HCT116 (cell line): ENCODE measurements at regions of chr2 and their contacts with region 1.

Region 1: DNA sequence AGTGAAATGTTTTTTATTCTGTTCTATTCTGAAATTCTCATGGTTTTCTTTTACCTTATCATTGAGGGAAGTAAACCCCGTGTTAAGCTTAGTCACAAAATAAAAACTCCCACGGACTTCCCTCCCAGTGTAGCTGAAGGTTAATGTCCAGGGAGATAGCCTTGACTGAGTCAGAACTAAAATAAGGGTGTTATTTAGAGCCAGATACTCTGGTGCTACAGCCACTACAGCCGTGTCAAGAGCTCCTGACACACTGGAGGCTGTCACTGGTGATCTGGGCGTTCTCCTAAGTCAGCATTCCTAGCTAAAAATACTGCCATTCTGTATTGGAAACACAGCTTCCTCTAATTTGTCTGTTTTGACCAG is 82.0 kb upstream of the RANBP2 start:
- DNase-seq: no peak
- ATAC-seq: no peak
- H3K4me3 ChIP-seq: no peak overlapping the region
- H3K27ac ChIP-seq: no peak overlapping the region
- H3K4me1 ChIP-seq: peaks cover 0 to 40% of the 10 kb centered on the region in 2 experiments; a peak in 2 of 4 replicates
- H3K27me3 ChIP-seq: no peaks in the 10 kb centered on the region
- CTCF ChIP-seq: no peak
- POLR2A ChIP-seq: no peak
- RAD21 ChIP-seq: no peak

Region 2: GRCh38 chr2:108594132-108594981 is 42.9 kb before region 1 on chr2:
- CTCF ChIA-PET with region 1: interaction called, 11 read pairs
- POLR2A ChIA-PET with region 1: no interaction called
- RAD21 ChIA-PET with region 1: interaction called in 1 of 2 experiments, 6 read pairs
- intact Hi-C with region 1: no loop called
- DNase-seq: peak; percentile 62
- ATAC-seq: peak; percentile 65
- H3K4me3 ChIP-seq: peak overlapping the region in 1 of 2 experiments; percentile 42; a peak in 2 of 4 replicates
- H3K27ac ChIP-seq: peak overlapping the region; percentile 24; the same call in 1 of the 2 replicates
- H3K4me1 ChIP-seq: peaks cover 29 to 46% of the 10 kb centered on the region in 2 experiments
- H3K27me3 ChIP-seq: no peaks in the 10 kb centered on the region
- CTCF ChIP-seq: no peak
- POLR2A ChIP-seq: no peak
- RAD21 ChIP-seq: no peak

Region 3: DNA sequence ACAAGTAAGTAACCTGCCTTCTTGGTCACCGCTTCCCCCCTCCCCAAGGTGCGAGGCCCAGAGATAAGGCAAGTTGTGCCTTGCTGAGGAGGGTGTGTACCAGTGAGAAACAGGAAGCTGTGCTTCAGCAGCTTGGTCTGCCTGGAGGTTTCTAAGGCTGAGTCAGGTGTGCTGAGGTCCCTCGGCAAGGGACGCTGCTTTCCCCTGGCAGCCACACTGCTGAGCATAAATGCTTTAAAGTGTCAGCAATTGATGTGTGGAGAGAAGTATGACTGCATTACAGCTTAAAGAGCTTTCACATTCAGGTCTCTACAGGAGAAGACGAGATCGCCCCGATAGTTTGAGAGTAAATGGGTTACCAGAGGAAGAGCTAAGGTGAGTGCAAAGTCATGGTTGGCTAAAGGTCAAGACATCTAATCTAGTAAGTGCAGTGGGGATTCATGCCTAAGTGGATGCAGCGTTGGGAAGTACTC is 16.2 kb before region 1 on chr2:
- CTCF ChIA-PET with region 1: interaction called, 12 read pairs
- POLR2A ChIA-PET with region 1: no interaction called
- RAD21 ChIA-PET with region 1: no interaction called
- intact Hi-C with region 1: no loop called
- DNase-seq: peak; percentile 19
- ATAC-seq: peak; percentile 93
- H3K4me3 ChIP-seq: peak overlapping the region; percentile 6 to 32; a peak in 2 of 4 replicates
- H3K27ac ChIP-seq: no peak overlapping the region; the same call in 1 of the 2 replicates
- H3K4me1 ChIP-seq: peaks cover 19 to 36% of the 10 kb centered on the region in 2 experiments
- H3K27me3 ChIP-seq: no peaks in the 10 kb centered on the region
- CTCF ChIP-seq: no peak
- POLR2A ChIP-seq: no peak
- RAD21 ChIP-seq: no peak